Left ventricle myocardium superior (tissue), 1 donor: ENCODE measurements at regions of chr14 and their contacts with region 1.

Region 1: GRCh38 chr14:67943947-67944346 is 124.4 kb downstream of the RAD51B start:
- DNase-seq: no peak
- ATAC-seq: peak; percentile 52

Region 2: GRCh38 chr14:68020999-68021663 is 77.2 kb after region 1 on chr14:
- intact Hi-C with region 1: no loop called
- DNase-seq: no peak
- ATAC-seq: peak; percentile 35

Region 3: DNA sequence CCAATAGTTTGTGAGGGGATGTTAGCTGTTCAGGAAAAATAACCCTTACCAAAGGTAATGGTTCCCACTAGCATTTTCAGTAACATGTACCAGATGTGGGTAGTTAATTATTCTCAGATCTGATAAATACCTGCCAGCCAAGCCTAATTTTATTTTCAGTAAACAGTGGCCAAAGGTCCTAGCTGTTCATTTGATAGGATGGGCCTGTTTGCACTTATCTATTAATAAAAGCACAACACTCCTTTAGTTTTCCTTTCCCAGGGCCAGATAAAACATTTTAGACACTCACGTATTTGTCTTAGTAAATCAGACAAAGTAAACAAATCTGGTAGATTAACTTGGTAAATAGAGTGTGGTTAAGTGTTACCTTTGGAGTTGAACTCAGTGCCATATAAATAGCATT is 220.8 kb after region 1 on chr14:
- intact Hi-C with region 1: no loop called
- DNase-seq: no peak
- ATAC-seq: no peak

Region 4: DNA sequence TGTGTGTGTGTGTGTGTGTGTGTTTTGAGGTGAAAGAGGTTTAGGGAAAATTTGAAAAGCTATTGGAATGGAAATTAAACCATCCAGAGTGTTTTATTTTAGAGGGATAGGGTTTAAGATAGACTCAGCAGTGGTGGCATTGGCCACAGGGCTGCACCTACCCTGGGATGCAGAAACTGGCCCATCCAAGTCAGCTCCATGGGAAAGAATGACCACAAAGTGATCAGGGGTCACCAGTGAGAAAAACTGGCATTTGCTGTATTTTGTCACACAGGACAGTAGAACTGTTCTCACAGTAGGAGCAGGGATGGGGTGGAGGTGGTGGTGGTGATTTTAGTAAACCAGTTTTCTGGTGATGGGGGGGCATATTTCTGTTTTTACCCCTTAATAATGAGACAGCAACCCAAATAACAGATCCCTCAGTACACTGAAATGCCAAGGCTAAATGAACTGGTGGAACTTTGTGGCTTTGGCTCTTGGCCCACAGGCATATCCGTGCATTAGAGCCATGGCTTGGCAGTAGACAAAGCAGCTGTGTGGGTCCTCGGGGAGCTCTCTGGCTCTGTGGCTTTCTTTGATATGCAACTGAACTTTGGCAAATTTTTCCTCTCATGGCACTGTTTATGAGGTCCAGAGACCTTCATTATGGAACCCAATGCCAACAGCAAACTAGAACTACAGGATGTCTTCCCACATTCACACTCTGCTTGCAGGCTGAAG is 500.7 kb after region 1 on chr14:
- intact Hi-C with region 1: no loop called
- DNase-seq: peak; percentile 52
- ATAC-seq: peak; percentile 72

Region 5: DNA sequence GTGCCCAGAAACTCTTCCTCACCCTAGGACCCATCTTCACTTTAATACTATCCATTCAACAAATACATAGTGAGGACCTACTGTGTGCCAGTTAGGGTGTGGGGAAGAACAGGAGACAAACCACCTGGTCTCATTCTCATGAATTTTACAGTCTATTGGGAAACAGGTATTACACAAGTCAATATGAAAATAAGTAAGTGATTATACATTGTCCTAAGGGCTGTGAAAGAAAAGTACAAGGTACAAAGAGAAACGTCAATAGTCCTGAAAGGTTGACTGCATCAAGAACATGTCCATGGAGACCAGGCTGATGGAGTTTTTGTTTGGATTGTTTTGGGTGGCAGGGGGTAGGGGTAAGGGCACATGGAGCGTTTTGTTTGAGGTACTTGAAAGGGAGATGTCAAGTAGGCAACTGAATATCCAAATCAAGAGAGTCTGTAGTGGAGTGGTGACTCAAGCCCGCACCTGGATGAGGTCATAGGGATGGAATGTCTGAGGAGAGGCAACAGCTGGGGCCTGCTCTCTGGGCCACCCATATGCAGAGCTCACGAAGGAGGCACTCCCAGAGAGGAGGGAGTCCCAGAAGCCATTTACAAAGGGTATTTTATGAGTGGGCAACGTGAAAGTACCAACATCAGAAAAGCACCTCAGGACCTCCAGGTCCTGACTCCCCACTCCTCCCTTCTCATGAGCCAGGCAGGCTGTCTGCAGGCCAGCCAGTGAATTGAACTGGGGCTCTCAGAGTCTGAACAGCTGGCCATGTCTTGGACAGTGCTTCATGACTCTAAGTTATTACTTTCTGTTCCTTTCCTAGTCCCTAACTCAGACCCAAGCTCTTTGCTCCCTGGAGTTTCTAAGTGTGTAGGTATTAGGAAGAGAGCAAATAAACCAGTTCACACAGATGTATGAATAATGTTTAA is 577.0 kb after region 1 on chr14:
- intact Hi-C with region 1: loop called (anchors 10 kb)
- DNase-seq: no peak
- ATAC-seq: peak; percentile 15